Activated CD4-positive, alpha-beta memory T cell treated with anti-CD3 and anti-CD28 coated beads for 36 hours (primary cell): ENCODE measurements at regions of chr9 and their contacts with region 1.

Region 1: GRCh38 chr9:131253891-131254491 is 22.3 kb downstream of the FAM78A start:
- DNase-seq: no peak
- H3K4me3 Mint-ChIP-seq: peak overlapping the region; percentile 43
- H3K27ac Mint-ChIP-seq: peak overlapping the region; percentile 88
- H3K4me1 Mint-ChIP-seq: peaks cover 37% of the 10 kb centered on the region
- H3K27me3 Mint-ChIP-seq: no peaks in the 10 kb centered on the region

Region 2: DNA sequence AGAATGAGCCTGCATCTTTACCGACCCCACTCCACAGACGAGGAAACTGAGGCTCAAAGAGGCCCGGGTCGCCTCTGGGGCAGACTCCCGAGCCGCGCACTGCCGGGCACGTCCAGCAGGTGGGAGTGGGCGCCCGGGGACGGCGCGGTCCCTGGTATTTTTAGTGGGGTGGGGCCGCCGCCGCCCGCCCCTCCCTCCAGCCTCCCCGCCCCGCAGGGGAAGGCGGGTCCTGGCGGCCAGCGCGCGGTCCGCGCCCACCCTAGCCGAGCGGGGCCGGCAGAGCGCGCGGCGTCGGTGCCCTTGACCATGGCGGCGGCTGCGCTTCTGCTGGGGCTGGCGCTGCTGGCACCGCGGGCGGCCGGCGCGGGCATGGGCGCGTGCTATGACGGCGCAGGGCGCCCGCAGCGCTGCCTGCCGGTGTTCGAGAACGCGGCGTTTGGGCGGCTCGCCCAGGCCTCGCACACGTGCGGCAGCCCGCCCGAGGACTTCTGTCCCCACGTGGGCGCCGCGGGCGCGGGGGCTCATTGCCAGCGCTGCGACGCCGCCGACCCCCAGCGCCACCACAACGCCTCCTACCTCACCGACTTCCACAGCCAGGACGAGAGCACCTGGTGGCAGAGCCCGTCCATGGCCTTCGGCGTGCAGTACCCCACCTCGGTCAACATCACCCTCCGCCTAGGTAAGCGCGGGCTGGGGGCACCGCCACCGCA is 244.9 kb before region 1 on chr9 and contains the start of gene LAMC3:
- CTCF ChIA-PET with region 1: no interaction called
- POLR2A ChIA-PET with region 1: no interaction called
- intact Hi-C with region 1: no loop called
- DNase-seq: no peak
- H3K4me3 Mint-ChIP-seq: no peak within 1 kb of the TSS
- H3K27ac Mint-ChIP-seq: no peak within 1 kb of the TSS
- H3K4me1 Mint-ChIP-seq: no peaks in the 10 kb centered on the region
- H3K27me3 Mint-ChIP-seq: peaks cover 32% of the 10 kb centered on the region
- total RNA-seq, gene LAMC3: 0.12 to 0.34 TPM

Region 3: DNA sequence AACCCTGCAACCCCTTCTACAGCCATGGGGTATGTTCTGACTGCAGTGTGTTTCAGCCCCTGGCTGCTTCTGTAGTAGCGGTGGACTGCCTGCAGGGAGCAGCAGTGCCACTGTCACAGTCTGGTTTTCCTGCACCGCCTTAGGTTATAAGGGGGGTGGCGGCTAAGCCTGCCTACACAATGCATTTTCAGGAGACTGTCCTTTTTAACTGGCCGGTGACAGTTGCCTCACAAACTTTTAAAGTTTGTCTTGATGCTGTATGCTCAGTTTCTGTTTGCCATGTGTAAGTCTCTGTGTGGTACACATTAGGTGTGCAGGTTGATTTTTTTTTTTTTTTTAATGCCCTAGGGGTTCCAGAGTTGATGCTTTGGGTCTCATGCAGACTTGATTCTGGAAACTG is 75.6 kb before region 1 on chr9:
- CTCF ChIA-PET with region 1: interaction called, 3 read pairs
- POLR2A ChIA-PET with region 1: no interaction called
- intact Hi-C with region 1: loop called (anchors 5 kb)
- DNase-seq: peak; percentile 84
- H3K4me3 Mint-ChIP-seq: no peak overlapping the region
- H3K27ac Mint-ChIP-seq: no peak overlapping the region
- H3K4me1 Mint-ChIP-seq: peaks cover 5% of the 10 kb centered on the region
- H3K27me3 Mint-ChIP-seq: no peaks in the 10 kb centered on the region

Region 4: GRCh38 chr9:131237931-131238401 is 16.0 kb before region 1 on chr9:
- CTCF ChIA-PET with region 1: interaction called, 3 read pairs
- POLR2A ChIA-PET with region 1: interaction called, 14 read pairs
- intact Hi-C with region 1: loop called (anchors 1 kb)
- DNase-seq: peak; percentile 93
- H3K4me3 Mint-ChIP-seq: peak overlapping the region; percentile 59
- H3K27ac Mint-ChIP-seq: peak overlapping the region; percentile 94
- H3K4me1 Mint-ChIP-seq: peaks cover 47% of the 10 kb centered on the region
- H3K27me3 Mint-ChIP-seq: no peaks in the 10 kb centered on the region